PC-9 (cell line): ENCODE measurements at regions of chr2 and their contacts with region 1.

Region 1: GRCh38 chr2:46461011-46461674 is 18.2 kb upstream of the TMEM247 start:
- DNase-seq: peak; percentile 65 to 86
- H3K4me3 ChIP-seq: no peak overlapping the region
- H3K27ac ChIP-seq: no peak overlapping the region
- H3K4me1 ChIP-seq: peaks cover 7% of the 10 kb centered on the region
- H3K27me3 ChIP-seq: no peaks in the 10 kb centered on the region
- CTCF ChIP-seq: peak; percentile 100

Region 2: GRCh38 chr2:46010925-46011490 is 450.1 kb before region 1 on chr2:
- CTCF ChIA-PET with region 1: interaction called, 12 read pairs
- POLR2A ChIA-PET with region 1: no interaction called
- intact Hi-C with region 1: loop called (anchors 1 kb)
- DNase-seq: peak in 1 of 2 experiments; percentile 62
- H3K4me3 ChIP-seq: no peak overlapping the region
- H3K27ac ChIP-seq: no peak overlapping the region
- H3K4me1 ChIP-seq: peaks cover 18% of the 10 kb centered on the region
- H3K27me3 ChIP-seq: no peaks in the 10 kb centered on the region
- CTCF ChIP-seq: peak; percentile 95

Region 3: DNA sequence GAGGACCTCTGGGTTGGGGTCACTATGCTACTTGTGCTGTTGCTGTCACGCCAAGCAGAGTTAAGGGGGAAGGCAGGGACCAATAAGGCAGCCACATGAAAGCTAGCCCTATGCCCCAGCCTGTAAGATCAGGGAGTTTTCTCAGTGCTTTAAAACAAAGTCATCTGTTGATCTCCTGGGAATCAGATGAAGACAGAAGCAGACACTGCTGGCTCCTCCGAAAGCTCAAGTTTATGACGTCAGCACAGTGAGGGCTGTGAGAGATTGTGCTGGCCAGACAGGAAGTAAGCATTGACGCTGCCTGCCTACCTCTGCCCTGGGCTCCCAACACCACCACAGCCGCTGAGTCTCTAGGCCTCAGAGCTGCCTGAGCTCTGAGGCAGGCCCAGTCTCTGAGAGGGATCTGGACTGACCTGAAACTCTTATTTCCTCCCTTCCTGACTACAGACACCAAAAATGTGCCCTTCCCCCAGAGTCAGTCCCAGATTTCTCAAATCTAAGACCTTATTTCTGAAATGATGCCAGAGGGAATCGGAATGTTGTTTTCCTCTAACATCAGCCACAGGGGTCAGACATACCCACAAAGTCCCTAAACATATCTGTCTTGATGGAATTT is 282.0 kb before region 1 on chr2:
- CTCF ChIA-PET with region 1: no interaction called
- POLR2A ChIA-PET with region 1: no interaction called
- intact Hi-C with region 1: loop called (anchors 1 kb)
- DNase-seq: peak; percentile 82 to 99
- H3K4me3 ChIP-seq: no peak overlapping the region; the same call in 1 of the 2 replicates
- H3K27ac ChIP-seq: peak overlapping the region; percentile 94
- H3K4me1 ChIP-seq: peaks cover 58% of the 10 kb centered on the region
- H3K27me3 ChIP-seq: no peaks in the 10 kb centered on the region
- CTCF ChIP-seq: no peak; the same call in 1 of the 2 replicates

Region 4: DNA sequence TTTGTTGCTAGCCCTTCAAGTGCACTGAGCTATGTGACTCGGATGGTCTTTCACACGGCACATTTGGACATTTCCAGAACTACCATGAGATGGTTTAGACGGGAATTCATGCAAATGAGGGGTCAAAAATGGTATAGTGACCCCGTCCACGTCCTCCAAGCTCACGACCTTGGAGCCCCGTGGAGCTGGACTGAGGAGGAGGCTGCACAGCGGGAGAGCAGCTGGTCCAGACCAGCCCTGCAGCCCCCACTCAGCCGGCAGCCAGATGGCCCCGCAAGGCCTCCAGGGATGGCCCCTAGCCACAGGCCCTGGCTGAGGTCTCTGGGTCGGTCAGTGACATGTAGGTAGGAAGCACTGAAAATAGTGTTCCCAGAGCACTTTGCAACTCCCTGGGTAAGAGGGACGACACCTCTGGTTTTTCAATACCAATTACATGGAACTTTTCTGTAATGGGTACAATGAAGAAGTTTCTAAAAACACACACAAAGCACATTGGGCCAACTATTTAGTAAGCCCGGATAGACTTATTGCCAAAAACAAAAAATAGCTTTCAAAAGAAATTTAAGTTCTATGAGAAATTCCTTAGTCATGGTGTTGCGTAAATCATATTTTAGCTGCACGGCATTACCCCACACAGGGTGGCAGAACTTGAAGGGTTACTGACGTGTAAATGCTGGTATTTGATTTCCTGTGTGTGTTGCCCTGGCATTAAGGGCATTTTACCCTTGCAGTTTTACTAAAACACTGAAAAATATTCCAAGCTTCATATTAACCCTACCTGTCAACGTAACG is 75.2 kb before region 1 on chr2:
- CTCF ChIA-PET with region 1: no interaction called
- POLR2A ChIA-PET with region 1: no interaction called
- intact Hi-C with region 1: loop called (anchors 2 kb)
- DNase-seq: peak in 1 of 2 experiments; percentile 85
- H3K4me3 ChIP-seq: peak overlapping the region; percentile 3; the same call in 1 of the 2 replicates
- H3K27ac ChIP-seq: peak overlapping the region; percentile 81
- H3K4me1 ChIP-seq: peaks cover 32% of the 10 kb centered on the region
- H3K27me3 ChIP-seq: no peaks in the 10 kb centered on the region
- CTCF ChIP-seq: no peak

Region 5: GRCh38 chr2:46847235-46848068 is 386.3 kb after region 1 on chr2:
- CTCF ChIA-PET with region 1: no interaction called
- POLR2A ChIA-PET with region 1: no interaction called
- intact Hi-C with region 1: no loop called
- DNase-seq: peak; percentile 77 to 97
- H3K4me3 ChIP-seq: no peak overlapping the region
- H3K27ac ChIP-seq: no peak overlapping the region
- H3K4me1 ChIP-seq: peaks cover 51% of the 10 kb centered on the region
- H3K27me3 ChIP-seq: no peaks in the 10 kb centered on the region
- CTCF ChIP-seq: no peak